ENCODE measurements at regions of chr7 and their contacts with region 1.

Region 1: DNA sequence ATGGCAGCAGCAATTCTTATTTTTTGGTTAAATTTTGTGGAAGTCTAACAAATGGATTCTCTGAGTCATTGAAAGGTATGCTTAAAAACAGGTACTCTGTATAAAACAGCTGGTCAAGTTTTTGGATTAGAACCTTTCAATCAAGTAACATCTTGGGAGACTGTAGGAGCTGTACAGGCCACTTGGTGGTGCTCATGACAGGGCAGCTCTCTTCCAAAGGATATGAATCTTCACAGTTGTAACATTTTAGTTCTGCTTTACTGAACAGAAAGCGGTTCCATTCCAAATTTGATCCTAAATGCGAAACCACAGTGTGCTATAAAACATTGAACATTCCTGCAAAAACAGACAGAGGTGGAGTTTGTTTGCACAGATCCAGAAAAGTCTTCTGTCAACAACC is 44.5 kb upstream of the AGR3 start:
- DNase-seq: peak; percentile 68
- H3K4me3 ChIP-seq: no peak overlapping the region
- H3K27ac ChIP-seq: no peak overlapping the region
- H3K4me1 ChIP-seq: peaks cover 7% of the 10 kb centered on the region
- H3K27me3 ChIP-seq: no peaks in the 10 kb centered on the region
- CTCF ChIP-seq: peak; percentile 53 to 68
- POLR2A ChIP-seq: no peak

Region 2: DNA sequence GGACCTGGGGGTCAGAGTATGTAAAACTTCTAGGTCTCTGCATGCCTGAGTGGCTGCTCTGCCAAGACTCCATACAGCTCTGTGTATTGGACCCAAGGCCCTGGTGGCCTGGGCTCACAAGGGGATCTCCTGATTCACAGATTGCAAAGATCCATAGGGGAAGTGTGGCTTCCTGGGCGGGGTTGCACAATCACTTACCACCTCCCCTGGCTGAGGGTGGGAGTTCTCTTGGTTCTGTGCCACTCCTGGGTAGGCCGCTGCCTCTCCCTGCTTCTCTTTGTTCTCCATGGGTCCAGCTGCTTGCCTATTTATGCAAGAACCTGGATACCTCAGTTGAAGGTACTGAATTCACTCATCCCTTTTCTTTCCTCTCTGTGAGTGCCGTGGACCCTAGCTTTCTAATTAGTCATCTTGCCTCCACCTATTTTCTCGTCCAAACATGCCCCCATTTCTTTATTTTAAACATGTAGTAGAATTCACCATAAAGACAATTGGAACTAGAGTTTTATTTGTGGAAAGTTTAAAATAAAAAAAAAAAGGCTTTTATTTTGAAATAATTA is 26.0 kb before region 1 on chr7:
- CTCF ChIA-PET with region 1: no interaction called
- POLR2A ChIA-PET with region 1: no interaction called
- dilution Hi-C with region 1: no loop called
- intact Hi-C with region 1: no loop called
- DNase-seq: no peak
- H3K4me3 ChIP-seq: no peak overlapping the region
- H3K27ac ChIP-seq: no peak overlapping the region
- H3K4me1 ChIP-seq: no peaks in the 10 kb centered on the region
- H3K27me3 ChIP-seq: no peaks in the 10 kb centered on the region
- CTCF ChIP-seq: no peak
- POLR2A ChIP-seq: no peak

Region 3: DNA sequence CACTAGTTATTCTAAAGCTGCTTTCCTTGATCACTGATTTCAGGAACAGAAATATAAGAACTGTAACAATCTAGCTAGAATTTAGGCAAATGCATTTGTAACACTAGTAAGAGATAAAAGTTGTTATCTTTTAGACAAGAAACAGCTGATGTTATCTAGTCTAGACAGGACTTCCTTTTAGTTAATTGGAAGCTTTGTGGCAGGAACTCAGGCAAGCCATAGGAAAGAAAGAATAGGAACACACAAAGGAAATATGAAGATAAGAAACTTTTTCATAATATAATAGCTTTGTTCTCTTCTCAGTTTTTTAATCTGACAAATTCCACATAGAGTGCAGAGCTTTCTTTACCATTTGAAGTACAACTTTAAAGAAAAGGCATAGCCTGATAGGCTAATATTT is 14.5 kb after region 1 on chr7:
- CTCF ChIA-PET with region 1: interaction called, 10 read pairs
- POLR2A ChIA-PET with region 1: no interaction called
- dilution Hi-C with region 1: no loop called
- intact Hi-C with region 1: no loop called
- DNase-seq: peak; percentile 85
- H3K4me3 ChIP-seq: no peak overlapping the region
- H3K27ac ChIP-seq: peak overlapping the region; percentile 75
- H3K4me1 ChIP-seq: peaks cover 31% of the 10 kb centered on the region
- H3K27me3 ChIP-seq: no peaks in the 10 kb centered on the region
- CTCF ChIP-seq: no peak
- POLR2A ChIP-seq: peak; percentile 70

Region 4: GRCh38 chr7:17109017-17109416 is 182.7 kb after region 1 on chr7:
- CTCF ChIA-PET with region 1: no interaction called
- POLR2A ChIA-PET with region 1: no interaction called
- dilution Hi-C with region 1: no loop called
- intact Hi-C with region 1: no loop called
- DNase-seq: peak; percentile 39
- H3K4me3 ChIP-seq: no peak overlapping the region
- H3K27ac ChIP-seq: no peak overlapping the region
- H3K4me1 ChIP-seq: no peaks in the 10 kb centered on the region
- H3K27me3 ChIP-seq: no peaks in the 10 kb centered on the region
- CTCF ChIP-seq: no peak
- POLR2A ChIP-seq: no peak

Region 5: DNA sequence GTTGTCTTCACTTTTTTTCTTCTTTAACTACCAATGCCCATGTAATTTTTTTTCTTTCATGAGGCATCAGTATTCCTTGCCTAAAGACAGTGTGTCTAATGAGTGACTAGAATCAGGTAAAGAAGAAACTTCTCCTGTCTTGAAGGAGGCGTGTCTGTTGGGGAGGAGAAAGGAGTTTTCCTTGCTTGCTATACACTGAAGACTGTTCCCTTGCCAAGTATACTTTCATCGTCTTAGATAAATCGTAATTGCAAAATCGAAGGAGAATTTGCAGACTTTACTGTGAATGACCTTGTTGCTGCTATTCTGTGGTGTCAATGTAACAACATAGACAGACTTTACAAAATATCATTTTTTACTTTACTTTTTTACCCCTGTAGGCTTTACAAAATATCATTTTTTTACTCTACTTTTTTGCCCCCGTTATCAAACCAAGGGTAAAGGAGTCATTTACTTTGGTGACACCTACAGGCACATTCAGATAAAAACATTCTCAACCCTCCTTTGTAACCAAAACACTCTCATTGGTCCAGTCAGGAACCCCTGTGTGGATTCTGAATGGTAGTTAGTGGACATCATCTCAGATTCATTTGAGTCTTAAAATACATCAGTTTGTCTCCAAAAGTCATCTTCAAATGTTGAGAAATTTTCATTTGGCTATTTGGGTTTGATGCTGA is 604.6 kb after region 1 on chr7:
- CTCF ChIA-PET with region 1: interaction called, 5 read pairs
- POLR2A ChIA-PET with region 1: no interaction called
- dilution Hi-C with region 1: no loop called
- intact Hi-C with region 1: loop called (anchors 5 kb)
- DNase-seq: peak; percentile 60
- H3K4me3 ChIP-seq: no peak overlapping the region
- H3K27ac ChIP-seq: no peak overlapping the region
- H3K4me1 ChIP-seq: peaks cover 4% of the 10 kb centered on the region
- H3K27me3 ChIP-seq: no peaks in the 10 kb centered on the region
- CTCF ChIP-seq: peak in 1 of 2 donors; percentile 16
- POLR2A ChIP-seq: no peak

Region 6: DNA sequence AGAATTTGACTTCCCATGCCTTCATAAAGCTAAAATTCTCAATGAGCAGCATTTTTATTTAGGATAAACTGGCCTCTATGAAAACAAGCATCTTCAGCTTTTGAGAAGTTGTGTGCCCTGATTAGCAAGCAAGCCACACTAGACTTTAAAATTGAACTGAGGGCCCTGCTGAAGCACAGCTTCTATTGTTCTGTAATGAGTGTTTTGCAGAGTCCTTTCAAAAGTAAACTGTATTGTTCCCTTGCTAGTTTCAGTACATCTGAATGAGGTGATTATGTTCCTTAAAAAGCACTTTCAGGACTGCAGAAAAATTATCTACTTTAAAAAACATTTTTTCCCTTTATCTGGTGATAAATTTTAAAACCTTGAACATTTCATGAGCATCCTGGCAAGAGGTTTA is 1214.7 kb after region 1 on chr7:
- CTCF ChIA-PET with region 1: no interaction called
- POLR2A ChIA-PET with region 1: no interaction called
- dilution Hi-C with region 1: no loop called
- intact Hi-C with region 1: no loop called
- DNase-seq: no peak
- H3K4me3 ChIP-seq: no peak overlapping the region
- H3K27ac ChIP-seq: no peak overlapping the region
- H3K4me1 ChIP-seq: no peaks in the 10 kb centered on the region
- H3K27me3 ChIP-seq: no peaks in the 10 kb centered on the region
- CTCF ChIP-seq: no peak
- POLR2A ChIP-seq: no peak

Measured in endothelial cell of umbilical vein (primary cell).